HEK293 (cell line): ENCODE measurements at regions of chr14 and their contacts with region 1.

Region 1: DNA sequence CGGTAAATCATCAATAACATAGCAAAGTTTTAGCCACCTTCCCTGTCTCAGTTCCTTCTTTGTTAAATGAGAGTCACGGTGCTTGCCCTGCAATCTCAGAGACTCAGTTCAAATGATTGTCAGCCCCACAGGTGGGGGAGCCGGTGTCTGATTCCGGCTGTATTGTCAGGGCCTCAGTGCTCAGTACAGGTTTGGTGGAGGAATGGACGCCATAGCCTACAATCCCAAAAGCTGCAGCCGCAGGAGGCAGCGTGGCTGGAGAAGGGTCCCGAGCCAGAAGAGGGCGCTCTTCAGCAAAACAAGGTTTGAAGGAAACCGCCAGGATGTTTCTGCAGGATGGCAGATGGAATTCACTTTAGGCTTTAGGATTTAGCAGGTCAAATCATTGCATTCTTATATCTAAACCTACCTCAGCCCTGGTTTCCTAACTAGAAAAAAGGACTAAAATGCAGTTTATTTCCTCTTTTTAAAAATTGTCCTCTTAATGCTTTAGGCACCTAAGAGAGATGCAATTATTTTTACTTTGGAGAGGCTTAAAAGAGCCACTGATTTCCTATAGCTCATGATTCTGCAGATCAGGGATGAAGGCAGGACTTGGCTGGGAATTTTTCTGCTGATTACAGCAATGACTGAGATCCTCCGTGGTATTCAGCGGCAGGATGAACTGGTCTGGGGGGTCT is 29.2 kb downstream of the FOS start:
- H3K4me3 ChIP-seq: no peak overlapping the region
- H3K27ac ChIP-seq: no peak overlapping the region
- H3K4me1 ChIP-seq: 0 out of 2 replicates have a peak, but pooled peaks cover 2% of the 10 kb centered on the region
- CTCF ChIP-seq: peak; percentile 67

Region 2: DNA sequence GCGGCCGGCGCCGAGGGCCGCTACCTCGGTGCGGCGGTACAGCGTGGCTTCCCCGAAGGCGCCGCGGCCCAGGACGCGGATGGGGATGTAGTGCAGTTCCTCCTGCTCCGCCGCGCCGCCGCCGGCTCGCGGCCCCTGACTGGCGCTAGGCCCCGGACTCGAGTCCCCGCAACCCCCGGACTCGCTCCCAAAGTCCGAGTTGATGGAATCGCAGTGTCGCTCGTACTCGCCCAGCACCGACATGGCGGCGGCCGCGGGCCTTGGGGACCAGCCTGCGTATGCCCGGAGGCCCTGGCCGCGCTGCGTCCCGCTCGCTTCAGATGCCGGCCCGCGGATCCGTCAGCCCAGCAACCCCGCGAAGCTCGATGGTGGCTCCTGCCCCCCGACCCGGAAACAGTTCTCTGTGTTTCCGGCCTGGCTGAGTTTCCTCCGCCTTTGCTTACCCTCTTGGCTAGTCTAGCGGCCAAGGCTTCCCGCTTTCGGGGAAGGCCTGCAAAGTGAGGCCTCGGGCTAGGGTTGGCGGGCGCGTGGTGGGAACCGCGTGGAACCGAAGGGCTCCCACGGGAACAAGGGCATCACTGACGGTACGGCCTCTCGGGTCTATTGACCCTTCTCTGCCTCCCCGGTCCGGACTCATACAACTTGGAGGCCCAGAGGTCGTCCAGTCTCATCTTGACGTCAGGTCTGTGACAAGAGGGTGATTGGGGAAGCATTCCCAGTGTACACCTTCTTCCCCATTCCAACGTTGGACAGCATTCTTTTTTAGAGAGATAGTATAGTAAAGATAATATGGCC is 181.0 kb before region 1 on chr14 and contains the start of gene NEK9:
- CTCF ChIA-PET with region 1: interaction called, 54 read pairs
- POLR2A ChIA-PET with region 1: no interaction called
- H3K4me3 ChIP-seq: peak within 1 kb of the TSS; percentile 98
- H3K27ac ChIP-seq: peak within 1 kb of the TSS; percentile 94
- H3K4me1 ChIP-seq: peaks cover 19% of the 10 kb centered on the region
- CTCF ChIP-seq: peak; percentile 67

Region 3: GRCh38 chr14:75132382-75133086 is 175.3 kb before region 1 on chr14:
- CTCF ChIA-PET with region 1: interaction called, 54 read pairs
- POLR2A ChIA-PET with region 1: no interaction called
- H3K4me3 ChIP-seq: no peak overlapping the region
- H3K27ac ChIP-seq: no peak overlapping the region
- H3K4me1 ChIP-seq: 0 out of 2 replicates have a peak, but pooled peaks cover 4% of the 10 kb centered on the region
- CTCF ChIP-seq: peak; percentile 20; the same call in 1 of the 2 replicates

Region 4: DNA sequence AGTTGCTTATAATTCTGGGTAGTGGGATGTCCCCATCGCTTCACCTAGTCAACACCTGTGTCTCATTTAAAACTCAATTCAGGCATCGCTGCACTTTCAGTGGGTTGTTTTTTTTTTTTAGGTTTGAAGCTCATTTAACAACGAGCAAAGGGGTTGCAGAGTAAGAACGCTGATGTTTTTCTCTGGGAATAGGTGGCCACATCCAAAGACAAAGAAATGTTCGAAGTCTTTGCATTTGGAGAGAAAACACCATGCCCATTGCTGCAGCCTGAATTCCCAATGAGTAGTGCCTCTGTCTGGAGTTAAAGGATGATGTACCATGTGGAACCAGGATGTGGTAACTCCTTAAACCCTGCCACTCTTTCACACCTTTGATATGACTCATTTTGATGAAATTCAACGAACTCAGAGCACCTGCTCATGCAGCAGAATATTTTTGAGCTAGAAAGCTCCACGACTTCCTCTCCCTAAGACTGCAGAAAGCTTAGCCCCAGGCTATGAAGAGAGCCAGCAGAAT is 179.4 kb after region 1 on chr14:
- CTCF ChIA-PET with region 1: interaction called, 101 read pairs
- POLR2A ChIA-PET with region 1: interaction called, 3 read pairs
- H3K4me3 ChIP-seq: no peak overlapping the region
- H3K27ac ChIP-seq: no peak overlapping the region
- H3K4me1 ChIP-seq: no peaks in the 10 kb centered on the region
- CTCF ChIP-seq: no peak

Region 5: GRCh38 chr14:75493580-75494130 is 185.8 kb after region 1 on chr14:
- CTCF ChIA-PET with region 1: interaction called, 101 read pairs
- POLR2A ChIA-PET with region 1: interaction called, 3 read pairs
- H3K4me3 ChIP-seq: no peak overlapping the region
- H3K27ac ChIP-seq: no peak overlapping the region
- H3K4me1 ChIP-seq: peaks cover 11% of the 10 kb centered on the region
- CTCF ChIP-seq: no peak